K562 (cell line): ENCODE measurements at regions of chr12 and their contacts with region 1.

Region 1: GRCh38 chr12:53476769-53477209 is 22.5 kb downstream of the MAP3K12 start:
- DNase-seq: peak in 3 of 4 experiments; percentile 26 to 52 (median 43)
- ATAC-seq: peak; percentile 60
- H3K4me3 ChIP-seq: no peak overlapping the region
- H3K27ac ChIP-seq: no peak overlapping the region
- H3K4me1 ChIP-seq: peaks cover 0 to 5% of the 10 kb centered on the region in 2 experiments; a peak in 3 of 5 replicates
- H3K27me3 ChIP-seq: no peaks in the 10 kb centered on the region
- CTCF ChIP-seq: peak; percentile 30 to 52 (median 35); a peak in 3 of 6 replicates
- EP300 ChIP-seq: no peak
- POLR2A ChIP-seq: peak; percentile 41; the same call in 1 of the 2 replicates
- RAD21 ChIP-seq: no peak

Region 2: GRCh38 chr12:53079226-53080117 is 397.3 kb before region 1 on chr12 and contains the start of gene SPRYD3:
- CTCF ChIA-PET with region 1: no interaction called
- POLR2A ChIA-PET with region 1: no interaction called
- in situ Hi-C with region 1: no loop called
- intact Hi-C with region 1: no loop called
- DNase-seq: peak; percentile 98 to 100 (median 100)
- ATAC-seq: peak; percentile 99
- H3K4me3 ChIP-seq: peak within 1 kb of the TSS; percentile 58
- H3K27ac ChIP-seq: peak within 1 kb of the TSS; percentile 71
- H3K4me1 ChIP-seq: peaks cover 5 to 13% of the 10 kb centered on the region in 2 experiments; a peak in 3 of 5 replicates
- H3K27me3 ChIP-seq: no peaks in the 10 kb centered on the region
- CTCF ChIP-seq: no peak
- EP300 ChIP-seq: no peak
- POLR2A ChIP-seq: peak; percentile 82
- RAD21 ChIP-seq: no peak
- polyA plus RNA-seq, gene SPRYD3: 1.5 to 2.6 TPM

Region 3: GRCh38 chr12:53465679-53466078 is 11.1 kb before region 1 on chr12:
- CTCF ChIA-PET with region 1: interaction called, 3 read pairs
- POLR2A ChIA-PET with region 1: interaction called, 99 read pairs
- in situ Hi-C with region 1: no loop called
- intact Hi-C with region 1: no loop called
- DNase-seq: no peak
- ATAC-seq: no peak
- H3K4me3 ChIP-seq: no peak overlapping the region
- H3K27ac ChIP-seq: no peak overlapping the region
- H3K4me1 ChIP-seq: peaks cover 0 to 3% of the 10 kb centered on the region in 2 experiments; a peak in 1 of 5 replicates
- H3K27me3 ChIP-seq: no peaks in the 10 kb centered on the region
- CTCF ChIP-seq: no peak
- EP300 ChIP-seq: no peak
- POLR2A ChIP-seq: no peak
- RAD21 ChIP-seq: no peak

Region 4: GRCh38 chr12:53492830-53493611 is 16.2 kb after region 1 on chr12:
- CTCF ChIA-PET with region 1: no interaction called
- POLR2A ChIA-PET with region 1: interaction called, 13 read pairs
- in situ Hi-C with region 1: no loop called
- intact Hi-C with region 1: no loop called
- DNase-seq: peak; percentile 91 to 96 (median 93)
- ATAC-seq: peak; percentile 93
- H3K4me3 ChIP-seq: peak overlapping the region; percentile 47
- H3K27ac ChIP-seq: peak overlapping the region; percentile 56
- H3K4me1 ChIP-seq: peaks cover 29 to 40% of the 10 kb centered on the region in 2 experiments; a peak in 4 of 5 replicates
- H3K27me3 ChIP-seq: no peaks in the 10 kb centered on the region
- CTCF ChIP-seq: no peak
- EP300 ChIP-seq: no peak
- POLR2A ChIP-seq: peak; percentile 69
- RAD21 ChIP-seq: no peak

Region 5: DNA sequence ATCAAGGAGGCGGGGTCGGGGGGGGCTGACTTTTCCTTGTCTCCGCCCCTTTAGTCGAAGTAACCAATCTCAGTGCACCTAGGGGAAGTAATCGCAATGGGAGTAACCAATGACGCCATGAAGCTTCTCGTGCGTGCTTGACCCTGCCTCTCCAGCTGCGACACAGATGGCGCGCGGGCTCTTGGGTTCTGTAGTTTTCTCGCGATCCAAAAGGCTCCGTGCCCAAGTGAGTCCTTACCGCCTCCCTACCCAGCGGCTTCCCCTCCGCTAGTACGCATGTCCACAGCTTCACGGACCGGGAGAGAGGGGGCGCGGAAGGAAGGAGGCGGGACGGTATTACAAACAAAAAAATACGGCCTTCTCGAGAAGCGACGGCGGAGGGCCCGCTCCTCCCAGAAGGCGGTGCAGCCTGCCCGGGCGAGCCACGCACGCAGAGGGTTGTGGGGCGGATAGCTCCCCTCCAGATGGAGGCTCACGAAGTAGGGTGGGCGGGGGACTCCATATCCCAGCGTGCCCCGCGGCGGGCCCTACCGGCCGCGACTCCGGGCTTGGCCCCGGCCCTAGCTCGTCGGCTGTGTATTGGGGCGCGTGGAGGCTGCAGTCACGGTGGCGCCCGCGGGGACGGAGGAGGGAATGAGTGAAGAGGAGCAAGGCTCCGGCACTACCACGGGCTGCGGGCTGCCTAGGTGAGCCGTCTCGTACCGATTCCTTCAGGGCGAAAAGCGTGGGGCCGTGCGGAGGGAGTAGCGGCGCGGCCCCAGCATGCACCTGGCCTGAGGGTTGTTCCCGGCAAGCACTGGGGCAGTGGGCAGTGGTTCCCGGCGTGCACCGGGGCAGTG is 24.2 kb after region 1 on chr12 and contains the start of gene TARBP2:
- CTCF ChIA-PET with region 1: no interaction called
- POLR2A ChIA-PET with region 1: interaction called, 24 read pairs
- in situ Hi-C with region 1: no loop called
- intact Hi-C with region 1: no loop called
- DNase-seq: peak; percentile 85 to 98 (median 88)
- ATAC-seq: peak; percentile 86
- H3K4me3 ChIP-seq: peak within 1 kb of the TSS; percentile 79
- H3K27ac ChIP-seq: peak within 1 kb of the TSS; percentile 97
- H3K4me1 ChIP-seq: peaks cover 33 to 47% of the 10 kb centered on the region in 2 experiments; a peak in 4 of 5 replicates
- H3K27me3 ChIP-seq: no peaks in the 10 kb centered on the region
- CTCF ChIP-seq: no peak
- EP300 ChIP-seq: no peak
- POLR2A ChIP-seq: peak; percentile 96
- RAD21 ChIP-seq: no peak
- polyA plus RNA-seq, gene TARBP2: 5.6 to 16.6 TPM

Region 6: DNA sequence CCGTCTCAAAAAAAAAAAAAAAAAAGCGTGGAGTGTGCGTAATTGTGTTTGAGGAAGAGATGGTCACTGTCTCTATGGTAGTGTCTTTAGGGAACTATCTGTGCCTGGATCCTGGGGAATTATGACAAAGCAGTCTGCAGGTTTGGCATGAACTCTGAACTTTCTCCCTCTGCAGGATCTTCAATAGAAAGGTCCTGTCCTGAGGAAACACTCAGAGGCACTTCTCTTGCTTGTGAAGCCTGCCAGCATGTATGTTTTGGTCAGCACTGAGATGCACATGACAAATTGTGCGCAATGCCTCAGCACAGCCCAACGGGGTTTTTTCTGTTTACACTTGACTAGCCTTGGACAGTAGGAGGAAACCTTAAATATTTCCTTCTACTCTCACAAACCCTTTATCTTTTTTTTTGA is 102.8 kb after region 1 on chr12:
- CTCF ChIA-PET with region 1: no interaction called
- POLR2A ChIA-PET with region 1: no interaction called
- in situ Hi-C with region 1: no loop called
- intact Hi-C with region 1: no loop called
- DNase-seq: no peak
- ATAC-seq: no peak; the same call in 2 of the 3 replicates
- H3K4me3 ChIP-seq: no peak overlapping the region
- H3K27ac ChIP-seq: no peak overlapping the region
- H3K4me1 ChIP-seq: peaks cover 2 to 6% of the 10 kb centered on the region in 2 experiments; a peak in 2 of 5 replicates
- H3K27me3 ChIP-seq: no peaks in the 10 kb centered on the region
- CTCF ChIP-seq: no peak
- EP300 ChIP-seq: no peak
- POLR2A ChIP-seq: no peak
- RAD21 ChIP-seq: no peak

Region 7: DNA sequence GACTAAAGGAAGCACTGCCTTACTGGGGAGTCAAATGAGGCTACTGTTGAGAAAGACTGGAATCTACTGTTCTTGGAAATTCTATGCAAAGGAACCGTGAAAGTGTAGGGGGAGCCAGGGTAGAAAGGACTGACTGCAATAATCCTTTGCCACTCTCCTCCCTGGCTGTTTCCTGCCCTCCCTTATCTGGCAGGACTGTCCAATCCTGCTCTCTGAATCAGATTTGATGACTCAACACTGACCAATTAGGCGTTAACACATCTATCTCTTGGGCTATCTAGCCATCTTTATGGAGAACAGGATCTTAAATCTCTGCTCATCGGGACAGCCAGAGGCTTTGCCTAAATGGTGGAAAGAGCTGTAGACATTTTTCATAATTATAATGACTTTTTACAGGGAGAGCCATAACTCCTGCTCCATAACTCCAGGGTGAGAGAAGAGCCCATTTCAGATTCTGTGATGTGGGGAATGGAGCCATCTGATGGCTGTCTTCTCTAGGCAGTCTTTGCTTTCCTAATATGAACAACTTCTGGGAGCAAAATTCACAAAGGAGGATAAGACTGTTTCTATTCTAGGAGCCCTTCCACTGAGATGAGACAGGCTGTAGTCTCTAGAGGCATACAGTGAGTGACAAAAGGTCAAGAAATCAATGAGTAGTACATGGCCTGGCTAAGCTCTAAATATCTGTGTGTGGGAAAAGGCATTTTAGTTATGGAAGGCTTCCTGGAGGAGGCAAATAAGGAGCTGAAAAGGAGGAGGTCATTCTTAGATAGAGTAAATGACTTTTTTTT is 343.9 kb after region 1 on chr12:
- CTCF ChIA-PET with region 1: no interaction called
- POLR2A ChIA-PET with region 1: no interaction called
- in situ Hi-C with region 1: no loop called
- intact Hi-C with region 1: no loop called
- DNase-seq: no peak
- ATAC-seq: no peak
- H3K4me3 ChIP-seq: no peak overlapping the region
- H3K27ac ChIP-seq: no peak overlapping the region
- H3K4me1 ChIP-seq: no peaks in the 10 kb centered on the region
- H3K27me3 ChIP-seq: peaks cover 0 to 43% of the 10 kb centered on the region in 2 experiments; a peak in 3 of 5 replicates
- CTCF ChIP-seq: no peak
- EP300 ChIP-seq: no peak
- POLR2A ChIP-seq: no peak
- RAD21 ChIP-seq: no peak